Right ventricle myocardium inferior (tissue), 1 donor: ENCODE measurements at regions of chr1 and their contacts with region 1.

Region 1: GRCh38 chr1:35268282-35269200 is at the start of gene ZMYM4:
- DNase-seq: peak; percentile 95
- ATAC-seq: peak; percentile 98
- total RNA-seq, gene ZMYM4: 27.7 TPM

Region 2: GRCh38 chr1:35192853-35193664 is 75.5 kb before region 1 on chr1 and contains the start of gene SFPQ:
- intact Hi-C with region 1: loop called (anchors 5 kb)
- DNase-seq: peak; percentile 96
- ATAC-seq: peak; percentile 97
- total RNA-seq, gene SFPQ: 79.2 TPM

Region 3: DNA sequence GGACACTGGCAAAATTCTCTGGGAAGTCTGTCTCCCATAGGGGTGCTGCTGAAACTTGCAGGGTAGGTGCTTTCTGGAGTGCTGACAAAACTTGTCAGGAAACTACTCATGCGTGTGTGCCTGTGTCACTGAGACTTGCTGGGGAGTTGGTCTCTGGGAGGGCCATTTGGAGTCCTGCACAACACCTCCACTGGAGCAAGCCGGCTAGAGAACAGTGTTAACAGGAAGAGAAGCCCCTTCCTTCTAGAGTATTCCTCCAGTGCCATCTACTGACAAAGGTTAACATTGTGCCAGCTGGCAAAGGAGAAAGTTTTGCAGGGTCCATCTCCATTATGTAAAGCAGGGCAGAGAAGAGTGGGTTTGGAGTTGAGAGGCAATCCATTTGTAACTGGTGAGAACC is 29.9 kb after region 1 on chr1:
- intact Hi-C with region 1: loop called (anchors 2 kb)
- DNase-seq: no peak
- ATAC-seq: peak; percentile 61